ENCODE measurements at regions of chr3 and their contacts with region 1.

Region 1: GRCh38 chr3:194404365-194405140 is 5.5 kb upstream of the GP5 start:
- DNase-seq: peak; percentile 38 to 56
- H3K4me3 ChIP-seq: no peak overlapping the region
- H3K27ac ChIP-seq: no peak overlapping the region
- H3K4me1 ChIP-seq: no peaks in the 10 kb centered on the region
- H3K27me3 ChIP-seq: no peaks in the 10 kb centered on the region
- CTCF ChIP-seq: peak; percentile 96

Region 2: GRCh38 chr3:193665370-193665989 is 739.1 kb before region 1 on chr3:
- CTCF ChIA-PET with region 1: no interaction called
- POLR2A ChIA-PET with region 1: no interaction called
- intact Hi-C with region 1: loop called (anchors 5 kb)
- DNase-seq: peak in 1 of 2 experiments; percentile 70
- H3K4me3 ChIP-seq: no peak overlapping the region
- H3K27ac ChIP-seq: no peak overlapping the region
- H3K4me1 ChIP-seq: no peaks in the 10 kb centered on the region
- H3K27me3 ChIP-seq: no peaks in the 10 kb centered on the region
- CTCF ChIP-seq: peak; percentile 93

Region 3: DNA sequence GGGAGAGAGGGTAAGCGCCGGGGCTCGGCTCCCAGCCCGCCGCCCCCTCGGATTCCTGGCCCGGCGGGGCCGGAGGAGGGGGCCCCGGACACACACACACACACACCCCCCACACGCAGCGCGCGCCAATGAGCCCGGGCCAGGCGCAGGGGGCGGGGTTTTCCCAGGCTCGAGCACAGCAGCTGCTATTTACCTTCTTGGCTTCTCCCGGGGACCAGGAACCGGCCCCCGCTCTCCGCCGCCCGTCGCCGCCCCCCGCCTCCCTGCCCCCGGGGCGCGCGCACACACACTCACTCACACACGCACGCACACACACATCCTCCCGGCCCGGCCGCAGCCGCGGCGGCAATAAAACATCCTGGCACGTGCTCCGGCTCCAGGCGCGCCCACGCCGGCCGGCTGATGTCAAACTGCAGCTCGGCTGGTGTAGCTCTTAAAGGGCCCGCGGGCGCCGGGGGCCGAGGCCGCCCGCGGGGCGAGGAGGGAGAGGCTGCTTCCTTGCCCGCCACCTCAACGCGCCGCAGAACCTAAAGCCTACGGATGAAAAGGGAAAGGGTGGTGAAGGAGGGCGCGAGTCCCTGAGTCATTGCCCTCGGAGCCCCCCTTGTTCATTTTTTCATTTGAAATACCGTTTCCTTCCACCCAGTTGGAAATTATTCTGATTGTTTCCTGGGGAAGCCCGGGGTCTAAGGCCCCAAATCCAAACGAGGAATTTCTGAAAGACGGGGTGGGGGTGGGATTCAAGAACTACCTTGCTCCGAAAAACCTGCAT is 269.6 kb before region 1 on chr3:
- CTCF ChIA-PET with region 1: no interaction called
- POLR2A ChIA-PET with region 1: no interaction called
- intact Hi-C with region 1: no loop called
- DNase-seq: peak; percentile 96 to 100
- H3K4me3 ChIP-seq: peak overlapping the region; percentile 55
- H3K27ac ChIP-seq: peak overlapping the region; percentile 88
- H3K4me1 ChIP-seq: peaks cover 60% of the 10 kb centered on the region
- H3K27me3 ChIP-seq: no peaks in the 10 kb centered on the region
- CTCF ChIP-seq: no peak

Region 4: GRCh38 chr3:194458131-194458530 is 53.6 kb after region 1 on chr3:
- CTCF ChIA-PET with region 1: no interaction called
- POLR2A ChIA-PET with region 1: no interaction called
- intact Hi-C with region 1: no loop called
- DNase-seq: no peak
- H3K4me3 ChIP-seq: no peak overlapping the region
- H3K27ac ChIP-seq: no peak overlapping the region
- H3K4me1 ChIP-seq: no peaks in the 10 kb centered on the region; the same call in 1 of the 2 replicates
- H3K27me3 ChIP-seq: no peaks in the 10 kb centered on the region
- CTCF ChIP-seq: no peak